A673 (cell line): ENCODE measurements at regions of chr12 and their contacts with region 1.

Region 1: GRCh38 chr12:90978117-90978770 is 23.3 kb upstream of the CCER1 start:
- DNase-seq: peak; percentile 64
- H3K4me3 ChIP-seq: no peak overlapping the region
- H3K27ac ChIP-seq: no peak overlapping the region
- H3K4me1 ChIP-seq: no peaks in the 10 kb centered on the region
- H3K27me3 ChIP-seq: no peaks in the 10 kb centered on the region
- CTCF ChIP-seq: peak; percentile 70

Region 2: GRCh38 chr12:91109148-91109564 is 130.9 kb after region 1 on chr12:
- CTCF ChIA-PET with region 1: no interaction called
- POLR2A ChIA-PET with region 1: no interaction called
- intact Hi-C with region 1: loop called (anchors 1 kb)
- DNase-seq: peak; percentile 64
- H3K4me3 ChIP-seq: no peak overlapping the region
- H3K27ac ChIP-seq: no peak overlapping the region
- H3K4me1 ChIP-seq: no peaks in the 10 kb centered on the region
- H3K27me3 ChIP-seq: no peaks in the 10 kb centered on the region
- CTCF ChIP-seq: peak; percentile 86